Natural killer cell (primary cell): ENCODE measurements at regions of chr4 and their contacts with region 1.

Region 1: DNA sequence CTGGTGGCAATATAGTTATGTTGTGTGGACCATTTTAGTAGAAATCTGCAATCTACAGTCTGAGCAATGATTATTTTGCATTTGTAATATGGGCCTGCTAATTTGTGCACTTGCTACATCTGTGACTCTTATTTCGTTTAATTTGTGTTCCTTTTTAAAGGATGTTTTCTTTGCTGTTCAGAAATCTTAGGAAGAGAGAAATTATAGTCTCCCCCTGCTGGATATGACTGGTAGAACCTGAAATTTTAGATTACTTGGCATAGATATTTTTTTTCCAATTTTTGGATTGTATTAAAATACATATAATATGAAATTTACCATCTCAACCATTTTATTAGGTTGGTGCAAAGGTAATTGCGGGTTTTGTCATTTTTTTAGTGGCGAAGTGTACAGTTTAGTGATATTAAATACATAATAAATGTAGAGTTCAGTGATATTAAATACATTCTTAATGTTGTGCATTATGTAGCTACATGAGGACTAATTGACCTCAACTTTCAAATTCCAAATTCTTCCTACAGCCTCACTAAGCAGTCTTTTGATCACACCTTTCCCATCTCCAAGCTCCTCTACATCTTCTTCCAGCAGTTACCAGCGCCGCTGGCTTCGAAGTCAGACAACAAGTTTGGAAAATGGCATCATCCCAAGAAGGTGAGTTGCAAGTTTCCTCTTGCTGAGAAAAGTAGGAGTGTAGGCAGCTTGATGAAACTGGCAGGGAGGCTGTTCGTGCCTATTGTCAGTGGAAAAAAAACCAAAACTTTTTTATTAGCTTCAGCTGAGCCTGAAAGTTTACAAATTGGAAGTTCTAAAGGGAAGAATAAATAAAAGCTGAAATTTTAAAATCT is 82.2 kb downstream of the FNIP2 start:
- DNase-seq: peak in 1 of 2 donors; percentile 59
- ATAC-seq: peak in 2 of 3 donors; percentile 51 to 64
- H3K4me3 ChIP-seq: no peak overlapping the region
- H3K4me3 Mint-ChIP-seq: no peak overlapping the region
- H3K27ac ChIP-seq: no peak overlapping the region
- H3K27ac Mint-ChIP-seq: peak overlapping the region in 1 of 2 donors; percentile 1
- H3K4me1 ChIP-seq: no peaks in the 10 kb centered on the region
- H3K4me1 Mint-ChIP-seq: peaks cover 19 to 20% of the 10 kb centered on the region in 2 donors
- H3K27me3 ChIP-seq: no peaks in the 10 kb centered on the region
- H3K27me3 Mint-ChIP-seq: no peaks in the 10 kb centered on the region
- CTCF ChIP-seq: peak; percentile 83

Region 2: GRCh38 chr4:158729716-158730559 is 121.1 kb before region 1 on chr4:
- intact Hi-C with region 1: loop called (anchors 1 kb)
- DNase-seq: peak; percentile 40 to 77
- ATAC-seq: peak; percentile 84 to 92 (median 90)
- H3K4me3 ChIP-seq: no peak overlapping the region
- H3K4me3 Mint-ChIP-seq: no peak overlapping the region
- H3K27ac ChIP-seq: no peak overlapping the region
- H3K27ac Mint-ChIP-seq: no peak overlapping the region
- H3K4me1 ChIP-seq: no peaks in the 10 kb centered on the region
- H3K4me1 Mint-ChIP-seq: peaks cover 0 to 5% of the 10 kb centered on the region in 2 donors
- H3K27me3 ChIP-seq: peaks cover 15% of the 10 kb centered on the region
- H3K27me3 Mint-ChIP-seq: peaks cover 45% of the 10 kb centered on the region in 2 donors
- CTCF ChIP-seq: peak; percentile 81

Region 3: DNA sequence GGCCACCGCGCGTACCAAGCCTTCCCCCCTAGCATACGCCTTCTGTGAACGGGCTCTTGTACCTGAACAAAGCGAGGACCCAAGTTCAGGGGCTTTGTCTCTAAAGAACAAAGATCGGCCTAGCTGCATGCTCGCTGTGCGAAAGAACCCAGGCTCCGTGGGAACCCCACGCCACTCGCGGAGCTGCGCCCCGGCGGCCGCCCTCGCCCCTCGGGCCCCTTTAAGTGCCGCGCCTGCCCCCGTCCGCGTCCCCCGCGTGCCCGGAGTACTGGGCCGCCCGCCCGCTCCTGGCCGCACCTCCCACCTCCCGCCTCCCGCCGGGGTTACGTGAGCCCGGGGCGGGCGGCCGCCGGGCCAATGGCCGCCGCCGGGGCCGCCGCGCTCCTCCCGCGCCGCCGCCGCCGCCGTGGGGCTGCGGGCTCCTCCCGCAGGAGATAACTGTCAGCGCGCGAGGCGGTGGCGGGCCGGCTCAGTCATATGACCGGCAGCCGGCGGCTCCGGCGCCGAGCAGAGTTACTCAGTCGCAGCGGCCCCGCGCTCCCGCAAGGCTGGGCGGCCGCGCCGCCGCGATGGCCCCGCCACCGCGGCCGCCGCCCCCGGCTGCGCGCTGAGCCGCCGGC is 82.4 kb before region 1 on chr4 and contains the start of gene FNIP2:
- intact Hi-C with region 1: loop called (anchors 2 kb)
- DNase-seq: peak; percentile 74 to 85
- ATAC-seq: peak; percentile 82 to 90 (median 86)
- H3K4me3 ChIP-seq: peak within 1 kb of the TSS; percentile 50
- H3K4me3 Mint-ChIP-seq: peak within 1 kb of the TSS; percentile 99
- H3K27ac ChIP-seq: peak within 1 kb of the TSS; percentile 80
- H3K27ac Mint-ChIP-seq: peak within 1 kb of the TSS; percentile 91 to 92
- H3K4me1 ChIP-seq: peaks cover 8% of the 10 kb centered on the region
- H3K4me1 Mint-ChIP-seq: peaks cover 29 to 32% of the 10 kb centered on the region in 2 donors
- H3K27me3 ChIP-seq: no peaks in the 10 kb centered on the region
- H3K27me3 Mint-ChIP-seq: no peaks in the 10 kb centered on the region
- CTCF ChIP-seq: no peak
- total RNA-seq, gene FNIP2: 19.4 to 22.6 (median 21.8) TPM

Region 4: DNA sequence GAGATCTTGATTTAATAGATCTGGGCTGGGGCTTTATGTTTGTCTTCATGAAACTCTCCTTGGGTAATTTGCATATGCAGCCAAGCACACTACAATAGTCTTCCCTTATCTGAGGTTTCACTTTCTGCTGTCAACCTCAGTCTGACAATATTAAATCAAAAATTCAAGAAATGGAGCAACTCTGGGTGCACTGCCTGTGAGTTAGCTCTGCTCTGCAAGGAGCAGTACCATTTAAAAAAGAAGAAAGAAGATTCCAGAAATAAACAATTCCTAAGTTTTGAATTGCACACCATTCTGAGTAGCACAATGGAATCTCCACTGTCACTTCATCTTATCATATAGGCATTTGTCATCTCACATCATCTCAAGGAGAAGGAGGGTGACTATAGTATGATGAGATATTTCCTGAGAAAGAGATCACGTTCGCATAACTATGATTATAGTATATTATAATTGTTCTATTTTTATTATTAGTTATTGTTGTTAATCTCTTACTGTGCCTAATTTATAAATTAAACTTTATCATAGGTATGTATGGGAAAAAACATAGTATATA is 72.8 kb before region 1 on chr4:
- intact Hi-C with region 1: loop called (anchors 1 kb)
- DNase-seq: peak in 1 of 2 donors; percentile 42
- ATAC-seq: peak; percentile 79 to 83 (median 81)
- H3K4me3 ChIP-seq: no peak overlapping the region
- H3K4me3 Mint-ChIP-seq: peak overlapping the region; percentile 82
- H3K27ac ChIP-seq: peak overlapping the region; percentile 26
- H3K27ac Mint-ChIP-seq: peak overlapping the region; percentile 63 to 87
- H3K4me1 ChIP-seq: peaks cover 3% of the 10 kb centered on the region
- H3K4me1 Mint-ChIP-seq: peaks cover 32 to 33% of the 10 kb centered on the region in 2 donors
- H3K27me3 ChIP-seq: no peaks in the 10 kb centered on the region
- H3K27me3 Mint-ChIP-seq: no peaks in the 10 kb centered on the region
- CTCF ChIP-seq: no peak

Region 5: GRCh38 chr4:158817562-158818296 is 33.3 kb before region 1 on chr4:
- intact Hi-C with region 1: loop called (anchors 5 kb)
- DNase-seq: peak; percentile 19 to 28
- ATAC-seq: peak; percentile 84 to 89 (median 86)
- H3K4me3 ChIP-seq: no peak overlapping the region
- H3K4me3 Mint-ChIP-seq: peak overlapping the region; percentile 75
- H3K27ac ChIP-seq: peak overlapping the region; percentile 57
- H3K27ac Mint-ChIP-seq: peak overlapping the region; percentile 91 to 96
- H3K4me1 ChIP-seq: peaks cover 12% of the 10 kb centered on the region
- H3K4me1 Mint-ChIP-seq: peaks cover 24 to 65% of the 10 kb centered on the region in 2 donors
- H3K27me3 ChIP-seq: no peaks in the 10 kb centered on the region
- H3K27me3 Mint-ChIP-seq: no peaks in the 10 kb centered on the region
- CTCF ChIP-seq: no peak